ENCODE measurements at regions of chr18 and their contacts with region 1.

Region 1: GRCh38 chr18:54503131-54503894 is 87.7 kb upstream of the DYNAP start:
- DNase-seq: no peak
- H3K4me3 ChIP-seq: no peak overlapping the region
- H3K27ac ChIP-seq: no peak overlapping the region
- H3K4me1 ChIP-seq: no peaks in the 10 kb centered on the region
- H3K27me3 ChIP-seq: no peaks in the 10 kb centered on the region
- CTCF ChIP-seq: no peak

Region 2: DNA sequence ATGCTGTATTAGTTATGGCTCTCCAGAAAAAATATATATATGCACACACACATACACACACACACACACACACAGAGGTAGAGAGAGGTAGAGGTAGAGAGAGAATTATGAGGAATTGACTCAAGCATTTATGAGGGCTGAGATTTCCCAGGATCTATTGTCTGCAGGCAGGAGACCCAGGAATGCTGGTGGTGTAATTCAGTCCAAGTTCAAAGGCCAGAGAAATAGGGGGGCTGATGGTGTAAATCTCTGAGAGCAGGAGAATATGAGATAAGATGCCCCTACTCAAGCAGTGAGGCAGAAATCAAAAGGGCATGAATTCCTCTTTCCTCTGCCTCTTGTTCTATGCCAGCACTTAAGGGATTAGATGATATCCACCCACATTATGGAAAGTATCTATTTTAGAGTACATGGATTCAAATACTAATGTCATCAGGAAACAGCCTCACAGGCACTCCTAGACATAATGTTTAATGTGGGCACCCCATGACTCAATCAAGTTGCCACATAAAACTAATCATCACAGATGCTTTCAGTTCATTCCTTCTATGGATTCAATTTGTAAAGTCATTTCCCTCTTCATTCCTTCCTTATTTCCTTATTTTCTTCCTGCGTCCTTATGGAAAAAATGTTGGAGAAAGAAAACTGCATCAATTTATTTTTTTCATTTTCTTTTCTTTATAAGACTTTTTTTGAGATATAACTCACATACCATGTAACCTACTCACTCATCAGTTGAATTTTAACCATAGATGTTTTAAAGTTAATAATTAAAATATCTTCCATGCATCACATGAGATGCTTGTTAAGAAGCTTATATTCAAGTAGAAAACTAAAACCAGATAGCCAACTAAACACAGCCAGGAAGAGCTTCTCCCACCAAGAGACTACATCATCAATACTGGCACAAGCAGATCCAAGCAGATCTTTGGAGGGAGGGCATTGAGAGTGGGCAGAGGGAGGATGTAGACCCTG is 685.0 kb before region 1 on chr18:
- intact Hi-C with region 1: no loop called
- DNase-seq: no peak
- H3K4me3 ChIP-seq: no peak overlapping the region
- H3K27ac ChIP-seq: no peak overlapping the region
- H3K4me1 ChIP-seq: no peaks in the 10 kb centered on the region
- H3K27me3 ChIP-seq: no peaks in the 10 kb centered on the region
- CTCF ChIP-seq: no peak

Region 3: DNA sequence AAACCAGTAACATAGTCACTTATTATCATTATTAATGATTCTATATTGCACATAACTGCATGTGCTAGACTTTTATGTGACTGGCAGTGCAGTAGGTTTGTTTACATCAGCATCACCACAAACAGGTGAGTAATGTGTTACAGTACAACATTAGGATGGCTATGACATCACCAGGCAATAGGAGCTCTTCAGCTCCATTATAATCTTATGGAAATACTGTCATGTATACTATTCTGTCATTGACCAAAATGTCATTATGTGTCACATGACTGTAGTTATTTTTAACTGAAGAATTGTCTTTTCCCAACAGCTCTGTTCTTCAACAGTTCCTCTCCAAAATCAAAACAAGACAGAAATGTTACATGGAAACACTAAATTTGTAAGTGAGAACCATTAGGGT is 49.3 kb before region 1 on chr18:
- intact Hi-C with region 1: no loop called
- DNase-seq: no peak
- H3K4me3 ChIP-seq: no peak overlapping the region
- H3K27ac ChIP-seq: no peak overlapping the region
- H3K4me1 ChIP-seq: no peaks in the 10 kb centered on the region
- H3K27me3 ChIP-seq: no peaks in the 10 kb centered on the region
- CTCF ChIP-seq: no peak

Region 4: GRCh38 chr18:54515149-54515548 is 11.8 kb after region 1 on chr18:
- intact Hi-C with region 1: loop called (anchors 1 kb)
- DNase-seq: no peak
- H3K4me3 ChIP-seq: no peak overlapping the region
- H3K27ac ChIP-seq: no peak overlapping the region
- H3K4me1 ChIP-seq: no peaks in the 10 kb centered on the region
- H3K27me3 ChIP-seq: no peaks in the 10 kb centered on the region
- CTCF ChIP-seq: no peak

Measured in ascending aorta (tissue), 2 donors.